Endothelial cell of umbilical vein (primary cell): ENCODE measurements at regions of chr13 and their contacts with region 1.

Region 1: DNA sequence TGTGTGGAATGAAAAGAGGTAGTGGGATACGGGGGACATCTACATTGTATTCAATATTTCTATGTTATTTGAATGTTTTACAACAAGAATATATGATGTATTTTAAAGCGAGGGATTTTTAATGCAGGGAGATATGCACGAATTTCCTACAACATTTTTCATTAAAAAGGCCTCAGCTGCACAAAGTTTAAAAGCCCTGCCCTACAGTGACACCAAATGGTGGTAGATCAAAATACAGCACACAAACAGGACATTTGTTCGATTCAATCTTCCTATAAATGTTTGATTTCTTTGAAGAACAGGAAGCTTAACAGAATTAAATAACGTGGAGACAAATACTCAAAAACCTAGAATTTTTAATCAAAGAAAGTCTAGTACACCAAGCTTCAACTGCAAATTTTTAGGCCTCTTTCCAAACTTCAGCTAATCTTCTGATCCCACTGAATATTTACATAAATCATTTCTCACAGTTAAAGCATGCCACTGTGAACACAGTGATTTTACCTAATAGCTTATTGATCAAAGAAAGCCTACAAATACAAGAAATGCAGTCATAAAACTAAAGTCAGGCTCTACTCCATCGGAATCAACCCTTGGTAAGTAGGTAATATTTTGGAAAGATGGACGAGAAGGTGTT is 257.2 kb downstream of the DIAPH3 start:
- DNase-seq: peak; percentile 47
- H3K4me3 ChIP-seq: no peak overlapping the region
- H3K27ac ChIP-seq: no peak overlapping the region
- H3K4me1 ChIP-seq: peaks cover 2% of the 10 kb centered on the region
- H3K27me3 ChIP-seq: no peaks in the 10 kb centered on the region
- CTCF ChIP-seq: peak; percentile 24 to 37
- POLR2A ChIP-seq: no peak

Region 2: DNA sequence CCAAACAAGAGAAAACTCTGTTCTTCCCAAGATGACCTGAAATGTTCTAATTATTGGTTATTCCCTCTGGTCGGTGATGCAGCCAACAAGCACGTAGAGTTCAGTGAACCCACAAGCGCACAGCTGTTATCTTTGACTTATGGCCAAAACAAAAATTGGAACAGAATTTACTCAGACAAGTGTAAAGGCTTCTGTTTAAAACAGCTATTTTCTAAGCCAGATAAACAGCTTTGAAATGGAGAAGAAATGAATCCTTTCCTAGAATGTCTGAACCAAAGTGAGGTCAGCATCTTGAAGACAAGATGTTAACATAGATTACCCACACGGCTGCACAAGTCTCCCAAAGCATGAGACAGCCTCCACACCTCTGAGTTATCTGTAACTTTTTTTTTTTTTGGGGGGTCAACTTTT is 412.0 kb before region 1 on chr13:
- CTCF ChIA-PET with region 1: interaction called, 5 read pairs
- POLR2A ChIA-PET with region 1: no interaction called
- dilution Hi-C with region 1: no loop called
- intact Hi-C with region 1: loop called (anchors 10 kb)
- DNase-seq: peak; percentile 93
- H3K4me3 ChIP-seq: no peak overlapping the region
- H3K27ac ChIP-seq: peak overlapping the region; percentile 75
- H3K4me1 ChIP-seq: peaks cover 70% of the 10 kb centered on the region
- H3K27me3 ChIP-seq: no peaks in the 10 kb centered on the region
- CTCF ChIP-seq: no peak
- POLR2A ChIP-seq: no peak

Region 3: GRCh38 chr13:59690857-59691500 is 215.6 kb before region 1 on chr13:
- CTCF ChIA-PET with region 1: interaction called, 11 read pairs
- POLR2A ChIA-PET with region 1: no interaction called
- dilution Hi-C with region 1: no loop called
- intact Hi-C with region 1: no loop called
- DNase-seq: no peak
- H3K4me3 ChIP-seq: no peak overlapping the region
- H3K27ac ChIP-seq: no peak overlapping the region
- H3K4me1 ChIP-seq: no peaks in the 10 kb centered on the region
- H3K27me3 ChIP-seq: no peaks in the 10 kb centered on the region
- CTCF ChIP-seq: no peak
- POLR2A ChIP-seq: no peak

Region 4: GRCh38 chr13:59728896-59729545 is 177.5 kb before region 1 on chr13:
- CTCF ChIA-PET with region 1: no interaction called
- POLR2A ChIA-PET with region 1: no interaction called
- dilution Hi-C with region 1: no loop called
- intact Hi-C with region 1: no loop called
- DNase-seq: no peak
- H3K4me3 ChIP-seq: no peak overlapping the region
- H3K27ac ChIP-seq: no peak overlapping the region
- H3K4me1 ChIP-seq: no peaks in the 10 kb centered on the region
- H3K27me3 ChIP-seq: no peaks in the 10 kb centered on the region
- CTCF ChIP-seq: no peak
- POLR2A ChIP-seq: no peak

Region 5: DNA sequence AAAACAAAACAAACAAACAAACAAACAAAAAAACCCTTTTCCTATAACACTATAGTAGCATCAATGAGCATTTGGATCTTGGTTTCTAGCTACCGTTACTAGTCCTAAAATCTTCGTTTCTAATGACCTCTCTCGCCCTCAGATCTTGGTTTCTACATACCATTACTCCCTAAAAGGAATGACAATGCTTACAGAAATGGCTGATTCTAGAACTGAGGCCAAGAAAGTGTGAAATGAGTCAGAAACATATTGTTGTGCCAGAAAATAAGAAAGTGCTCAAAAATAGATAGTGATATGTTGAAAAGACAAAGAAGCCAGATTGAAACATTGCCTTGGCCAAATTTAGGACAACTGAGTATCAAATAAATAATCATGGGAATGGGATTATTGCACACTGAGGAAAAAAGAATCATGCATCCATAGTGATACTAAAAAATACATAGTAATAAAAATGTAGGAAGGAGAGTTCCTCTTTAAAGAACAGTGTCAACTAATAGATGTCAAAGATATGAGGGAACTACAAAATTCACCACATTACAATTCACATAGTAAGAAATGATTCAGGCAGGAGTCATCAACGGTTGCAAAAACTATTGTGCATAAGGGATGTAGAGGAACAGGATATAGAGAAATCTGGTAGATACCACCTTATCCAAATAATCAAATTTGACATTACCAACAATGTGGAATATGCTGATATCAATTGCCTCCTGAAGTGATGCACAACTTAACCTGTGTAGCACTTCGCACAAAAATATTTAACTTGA is 129.4 kb before region 1 on chr13:
- CTCF ChIA-PET with region 1: interaction called, 24 read pairs
- POLR2A ChIA-PET with region 1: no interaction called
- dilution Hi-C with region 1: no loop called
- intact Hi-C with region 1: loop called (anchors 2 kb)
- DNase-seq: peak; percentile 75
- H3K4me3 ChIP-seq: no peak overlapping the region
- H3K27ac ChIP-seq: peak overlapping the region; percentile 38
- H3K4me1 ChIP-seq: peaks cover 12% of the 10 kb centered on the region
- H3K27me3 ChIP-seq: no peaks in the 10 kb centered on the region
- CTCF ChIP-seq: no peak
- POLR2A ChIP-seq: no peak

Region 6: DNA sequence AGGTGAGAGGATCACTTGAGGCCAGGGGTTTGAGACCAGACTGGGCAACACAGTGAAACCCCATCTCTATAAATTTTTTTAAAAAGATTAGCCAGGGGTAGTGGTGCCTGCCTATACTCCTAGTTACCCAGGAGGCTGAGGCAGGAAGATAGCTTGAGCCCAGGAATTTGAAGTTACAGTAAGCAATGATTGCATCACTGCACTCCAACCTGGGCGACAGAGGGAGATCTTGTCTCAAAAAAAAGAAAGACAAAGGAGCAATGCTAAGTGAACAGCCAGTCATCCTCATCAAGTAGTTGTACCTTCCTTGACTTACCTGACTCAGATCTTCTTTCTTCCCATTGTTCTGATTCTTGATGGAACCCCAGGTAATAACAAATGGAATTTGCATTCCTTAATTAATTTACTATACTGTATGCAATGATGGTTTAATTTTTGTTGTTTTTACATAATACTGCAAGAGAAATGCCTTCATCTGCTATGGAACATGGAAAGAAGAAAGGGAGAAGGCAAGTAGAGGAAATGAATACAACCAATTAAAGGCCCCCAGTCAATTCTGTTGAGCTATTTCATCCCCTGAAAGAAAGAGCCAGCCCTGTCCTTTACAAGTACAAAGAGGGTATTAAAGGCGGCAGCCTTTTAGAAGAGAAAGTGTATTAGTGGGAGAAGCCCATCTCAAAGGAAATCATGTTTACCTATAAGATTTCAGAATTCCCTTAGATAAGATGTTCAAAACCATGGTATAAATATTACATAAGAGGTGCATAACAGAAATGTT is 59.5 kb before region 1 on chr13:
- CTCF ChIA-PET with region 1: no interaction called
- POLR2A ChIA-PET with region 1: no interaction called
- dilution Hi-C with region 1: no loop called
- intact Hi-C with region 1: no loop called
- DNase-seq: no peak
- H3K4me3 ChIP-seq: no peak overlapping the region
- H3K27ac ChIP-seq: no peak overlapping the region
- H3K4me1 ChIP-seq: peaks cover 14% of the 10 kb centered on the region
- H3K27me3 ChIP-seq: no peaks in the 10 kb centered on the region
- CTCF ChIP-seq: no peak
- POLR2A ChIP-seq: no peak

Region 7: GRCh38 chr13:60335531-60335930 is 429.0 kb after region 1 on chr13:
- CTCF ChIA-PET with region 1: interaction called, 3 read pairs
- POLR2A ChIA-PET with region 1: no interaction called
- dilution Hi-C with region 1: no loop called
- intact Hi-C with region 1: loop called (anchors 2 kb)
- DNase-seq: peak; percentile 37
- H3K4me3 ChIP-seq: no peak overlapping the region
- H3K27ac ChIP-seq: no peak overlapping the region
- H3K4me1 ChIP-seq: peaks cover 7% of the 10 kb centered on the region
- H3K27me3 ChIP-seq: peaks cover 9 to 17% of the 10 kb centered on the region in 2 experiments
- CTCF ChIP-seq: peak in 1 of 2 donors; percentile 27
- POLR2A ChIP-seq: no peak